PC-3 (cell line): ENCODE measurements at regions of chr1 and their contacts with region 1.

Region 1: GRCh38 chr1:180631766-180632325 is at the start of gene XPR1:
- DNase-seq: peak; percentile 94
- ATAC-seq: peak; percentile 99
- H3K4me3 ChIP-seq: peak within 1 kb of the TSS; percentile 70
- H3K27ac ChIP-seq: no peak within 1 kb of the TSS
- H3K4me1 ChIP-seq: peaks cover 4% of the 10 kb centered on the region; the same call in 1 of the 2 replicates
- H3K27me3 ChIP-seq: no peaks in the 10 kb centered on the region
- CTCF ChIP-seq: no peak
- total RNA-seq, gene XPR1: 7.3 and 8.2 TPM in 2 replicates

Region 2: GRCh38 chr1:180533266-180533987 is 98.4 kb before region 1 on chr1:
- CTCF ChIA-PET with region 1: interaction called, 3 read pairs
- POLR2A ChIA-PET with region 1: no interaction called
- intact Hi-C with region 1: loop called (anchors 5 kb)
- DNase-seq: peak; percentile 67
- ATAC-seq: peak; percentile 56
- H3K4me3 ChIP-seq: no peak overlapping the region
- H3K27ac ChIP-seq: no peak overlapping the region
- H3K4me1 ChIP-seq: peaks cover 7% of the 10 kb centered on the region; the same call in 1 of the 2 replicates
- H3K27me3 ChIP-seq: no peaks in the 10 kb centered on the region
- CTCF ChIP-seq: peak; percentile 83

Region 3: GRCh38 chr1:180778782-180779398 is 147.0 kb after region 1 on chr1:
- CTCF ChIA-PET with region 1: no interaction called
- POLR2A ChIA-PET with region 1: no interaction called
- intact Hi-C with region 1: loop called (anchors 5 kb)
- DNase-seq: peak; percentile 38
- ATAC-seq: peak; percentile 53
- H3K4me3 ChIP-seq: no peak overlapping the region
- H3K27ac ChIP-seq: no peak overlapping the region
- H3K4me1 ChIP-seq: no peaks in the 10 kb centered on the region
- H3K27me3 ChIP-seq: no peaks in the 10 kb centered on the region
- CTCF ChIP-seq: peak; percentile 71

Region 4: DNA sequence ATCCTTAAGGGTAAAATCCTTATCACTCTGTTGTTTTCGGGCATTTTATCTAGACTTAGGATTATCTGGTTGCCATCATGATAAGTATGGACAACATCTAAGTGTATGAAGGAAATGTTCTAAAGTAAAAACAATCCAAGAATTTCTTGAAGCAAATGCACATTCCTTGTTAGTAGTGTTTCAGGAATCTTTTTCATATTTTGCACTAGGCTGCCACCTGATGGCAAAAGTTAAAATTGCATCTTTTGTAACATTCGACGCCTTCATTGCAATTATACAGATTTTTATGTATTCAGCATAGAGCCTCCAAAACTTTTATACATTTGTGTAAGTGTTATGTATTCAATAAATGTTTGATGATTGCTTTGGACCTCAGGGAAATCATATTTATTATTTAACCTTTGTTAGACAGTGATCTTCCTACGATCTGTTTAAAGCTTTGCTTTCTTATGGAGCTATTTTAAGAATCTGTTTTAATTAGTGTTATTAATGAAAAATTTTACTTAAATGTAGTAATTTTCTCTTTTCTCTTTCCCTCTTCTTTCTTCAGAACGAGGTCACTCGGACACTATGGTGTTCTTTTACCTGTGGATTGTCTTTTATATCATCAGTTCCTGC is 231.4 kb after region 1 on chr1:
- CTCF ChIA-PET with region 1: no interaction called
- POLR2A ChIA-PET with region 1: interaction called, 7 read pairs
- intact Hi-C with region 1: loop called (anchors 5 kb)
- DNase-seq: peak; percentile 71
- ATAC-seq: no peak
- H3K4me3 ChIP-seq: no peak overlapping the region
- H3K27ac ChIP-seq: no peak overlapping the region
- H3K4me1 ChIP-seq: no peaks in the 10 kb centered on the region
- H3K27me3 ChIP-seq: no peaks in the 10 kb centered on the region
- CTCF ChIP-seq: peak; percentile 69

Region 5: GRCh38 chr1:181112071-181112929 is 480.5 kb after region 1 on chr1:
- CTCF ChIA-PET with region 1: no interaction called
- POLR2A ChIA-PET with region 1: no interaction called
- intact Hi-C with region 1: no loop called
- DNase-seq: peak; percentile 97
- ATAC-seq: peak; percentile 85
- H3K4me3 ChIP-seq: peak overlapping the region; percentile 51; the same call in 1 of the 2 replicates
- H3K27ac ChIP-seq: peak overlapping the region; percentile 100
- H3K4me1 ChIP-seq: peaks cover 51% of the 10 kb centered on the region
- H3K27me3 ChIP-seq: no peaks in the 10 kb centered on the region
- CTCF ChIP-seq: no peak

Region 6: GRCh38 chr1:181166377-181167196 is 534.7 kb after region 1 on chr1:
- CTCF ChIA-PET with region 1: no interaction called
- POLR2A ChIA-PET with region 1: no interaction called
- intact Hi-C with region 1: loop called (anchors 10 kb)
- DNase-seq: peak; percentile 80
- ATAC-seq: peak; percentile 99
- H3K4me3 ChIP-seq: no peak overlapping the region
- H3K27ac ChIP-seq: no peak overlapping the region
- H3K4me1 ChIP-seq: no peaks in the 10 kb centered on the region
- H3K27me3 ChIP-seq: no peaks in the 10 kb centered on the region
- CTCF ChIP-seq: peak; percentile 76